ENCODE measurements at regions of chr13 and their contacts with region 1.

Region 1: GRCh38 chr13:30114571-30115256 is 192.6 kb downstream of the KATNAL1 start:
- DNase-seq: peak; percentile 85 to 97 (median 93)

Region 2: GRCh38 chr13:29508130-29508875 is 606.4 kb before region 1 on chr13:
- intact Hi-C with region 1: loop called (anchors 2 kb)
- DNase-seq: peak; percentile 61 to 96 (median 90)

Region 3: GRCh38 chr13:29595380-29596063 is 519.2 kb before region 1 on chr13 and contains the start of gene SLC7A1:
- intact Hi-C with region 1: loop called (anchors 10 kb)
- DNase-seq: peak in 41 of 42 donors; percentile 37 to 88 (median 74)

Region 4: GRCh38 chr13:29679396-29680053 is 435.2 kb before region 1 on chr13:
- intact Hi-C with region 1: no loop called
- DNase-seq: no peak

Region 5: GRCh38 chr13:29771247-29771646 is 343.5 kb before region 1 on chr13:
- intact Hi-C with region 1: loop called (anchors 5 kb)
- DNase-seq: no peak

Region 6: GRCh38 chr13:29849731-29850223 is 264.9 kb before region 1 on chr13:
- intact Hi-C with region 1: loop called (anchors 5 kb)
- DNase-seq: peak; percentile 19 to 83 (median 60)

Region 7: GRCh38 chr13:30045916-30046704 is 68.6 kb before region 1 on chr13:
- intact Hi-C with region 1: no loop called
- DNase-seq: no peak

Region 8: GRCh38 chr13:30196025-30196424 is 81.3 kb after region 1 on chr13:
- intact Hi-C with region 1: no loop called
- DNase-seq: no peak

Region 9: GRCh38 chr13:30443957-30444404 is 329.3 kb after region 1 on chr13:
- intact Hi-C with region 1: no loop called
- DNase-seq: no peak

Measured in head of caudate nucleus (tissue), 42 donors.